ENCODE measurements at regions of chr1 and their contacts with region 1.

Region 1: DNA sequence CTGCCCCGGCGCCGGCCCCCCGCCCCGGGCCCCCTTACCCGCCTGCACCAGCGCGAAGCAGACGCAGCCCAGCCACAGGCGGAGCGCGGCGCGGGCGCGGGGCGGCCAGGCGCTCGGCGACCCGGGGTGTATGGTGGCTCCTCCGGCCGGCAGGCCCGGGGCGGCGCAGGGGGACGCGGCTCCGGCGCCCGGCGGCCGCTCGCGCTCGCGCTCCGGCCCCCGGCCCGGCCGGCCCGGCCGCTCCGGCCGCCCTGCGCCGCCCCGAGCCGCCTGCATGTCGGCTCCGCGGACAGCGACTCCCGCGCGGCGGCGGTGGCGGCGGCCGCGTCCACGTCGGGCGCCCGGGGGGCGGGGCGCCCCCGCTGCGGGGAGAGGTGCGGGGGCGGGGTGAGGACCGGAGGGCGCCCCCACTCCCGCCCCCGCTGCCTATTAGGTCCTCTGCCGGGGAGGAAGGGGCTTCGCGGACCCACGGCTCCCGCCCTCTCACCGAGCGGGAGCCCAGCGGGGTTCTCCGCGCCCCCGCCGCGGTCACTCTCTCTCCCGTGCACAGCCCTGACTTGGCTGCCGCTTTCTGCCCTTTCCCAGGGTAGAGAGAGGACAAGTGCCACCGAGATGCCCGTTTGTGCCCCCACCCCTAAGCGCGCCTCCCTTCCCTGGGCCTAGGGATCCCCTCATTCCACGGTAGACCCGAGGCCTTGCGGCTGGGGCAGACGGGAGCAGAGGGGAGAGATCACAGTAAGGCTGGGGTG is at the start of gene FNDC5:
- DNase-seq: no peak
- H3K4me3 ChIP-seq: peak within 1 kb of the TSS; percentile 54
- CTCF ChIP-seq: no peak

Region 2: DNA sequence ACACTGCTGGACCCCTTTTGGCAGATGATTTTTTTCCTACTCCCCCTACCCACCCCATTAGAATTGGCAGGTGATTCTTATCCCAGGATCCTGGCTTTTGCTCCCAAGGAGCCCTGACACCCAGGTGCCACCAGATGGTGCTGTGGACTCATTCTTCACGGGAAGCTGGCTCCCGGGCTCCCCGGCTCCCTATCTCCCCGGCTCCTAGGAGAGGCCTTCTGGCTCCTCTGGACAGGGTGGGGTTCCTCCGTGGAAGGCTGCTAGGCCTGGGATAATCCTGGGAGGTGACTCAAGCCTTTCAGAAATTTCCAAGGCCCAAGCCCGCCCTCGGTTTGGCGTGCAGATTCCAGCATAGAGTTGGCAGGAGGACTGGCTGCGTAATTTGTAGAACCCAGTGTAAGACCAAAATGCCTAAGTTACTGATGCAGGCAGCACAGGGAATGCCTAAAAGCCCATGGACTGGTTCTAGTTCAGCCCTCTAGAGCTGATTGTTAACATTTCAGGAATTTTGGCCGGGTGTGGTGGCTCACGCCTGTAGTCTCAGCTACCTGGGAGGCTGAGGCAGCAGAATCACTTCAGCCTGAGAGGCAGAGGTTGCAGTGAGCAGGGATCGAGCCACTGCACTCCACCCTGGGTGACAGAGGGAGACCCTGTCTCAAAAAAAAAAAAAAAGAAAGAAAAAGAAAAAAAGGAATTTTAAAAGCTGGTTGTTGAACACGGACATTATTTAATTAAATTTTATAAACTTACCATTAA is 469.7 kb before region 1 on chr1:
- CTCF ChIA-PET with region 1: interaction called, 43 read pairs
- POLR2A ChIA-PET with region 1: no interaction called
- DNase-seq: peak; percentile 31
- H3K4me3 ChIP-seq: no peak overlapping the region
- CTCF ChIP-seq: peak; percentile 84

Region 3: DNA sequence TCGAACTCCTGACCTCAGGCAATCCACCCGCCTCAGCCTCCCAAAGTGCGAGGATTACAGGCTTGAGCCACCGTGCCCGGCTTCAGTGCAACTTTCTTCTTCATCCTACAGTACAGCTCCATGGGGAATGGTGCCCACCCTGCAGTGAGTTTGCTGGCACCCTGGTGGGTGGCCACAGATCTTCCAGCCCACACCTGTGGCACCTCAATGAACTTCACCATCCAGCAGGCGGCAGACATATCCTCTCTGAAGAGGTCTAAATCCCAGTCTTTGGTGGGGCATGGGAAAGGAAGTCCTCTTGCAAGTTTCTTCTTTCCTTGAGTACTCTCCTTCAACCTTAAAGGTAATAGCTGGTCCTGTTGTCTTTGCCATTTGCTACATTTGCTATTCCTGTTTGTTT is 349.6 kb before region 1 on chr1:
- CTCF ChIA-PET with region 1: interaction called, 17 read pairs
- POLR2A ChIA-PET with region 1: no interaction called
- DNase-seq: no peak
- H3K4me3 ChIP-seq: no peak overlapping the region
- CTCF ChIP-seq: no peak

Region 4: DNA sequence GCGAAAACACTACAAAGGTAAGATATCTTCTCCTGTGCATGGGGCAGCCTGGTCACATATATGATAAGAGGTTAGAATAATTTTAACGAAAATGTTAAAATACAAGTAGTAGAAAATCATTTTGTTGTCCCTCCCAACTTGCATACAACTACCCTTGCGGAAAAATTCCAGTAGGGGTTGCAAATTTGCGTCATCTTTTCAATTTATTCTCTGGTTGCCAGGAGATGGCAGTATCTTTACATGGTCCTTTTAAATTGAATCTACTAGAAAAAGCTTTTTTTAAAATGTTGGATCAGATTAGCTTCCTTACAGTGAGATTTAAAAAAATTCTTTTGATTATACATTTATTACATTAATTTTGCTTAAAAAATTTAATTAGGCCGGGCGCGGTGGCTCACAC is 42.4 kb before region 1 on chr1:
- CTCF ChIA-PET with region 1: interaction called, 13 read pairs
- POLR2A ChIA-PET with region 1: no interaction called
- DNase-seq: no peak
- H3K4me3 ChIP-seq: no peak overlapping the region
- CTCF ChIP-seq: no peak

Region 5: GRCh38 chr1:32848354-32849063 is 22.3 kb before region 1 on chr1:
- CTCF ChIA-PET with region 1: interaction called, 28 read pairs
- POLR2A ChIA-PET with region 1: no interaction called
- DNase-seq: no peak
- H3K4me3 ChIP-seq: no peak overlapping the region
- CTCF ChIP-seq: no peak

Region 6: DNA sequence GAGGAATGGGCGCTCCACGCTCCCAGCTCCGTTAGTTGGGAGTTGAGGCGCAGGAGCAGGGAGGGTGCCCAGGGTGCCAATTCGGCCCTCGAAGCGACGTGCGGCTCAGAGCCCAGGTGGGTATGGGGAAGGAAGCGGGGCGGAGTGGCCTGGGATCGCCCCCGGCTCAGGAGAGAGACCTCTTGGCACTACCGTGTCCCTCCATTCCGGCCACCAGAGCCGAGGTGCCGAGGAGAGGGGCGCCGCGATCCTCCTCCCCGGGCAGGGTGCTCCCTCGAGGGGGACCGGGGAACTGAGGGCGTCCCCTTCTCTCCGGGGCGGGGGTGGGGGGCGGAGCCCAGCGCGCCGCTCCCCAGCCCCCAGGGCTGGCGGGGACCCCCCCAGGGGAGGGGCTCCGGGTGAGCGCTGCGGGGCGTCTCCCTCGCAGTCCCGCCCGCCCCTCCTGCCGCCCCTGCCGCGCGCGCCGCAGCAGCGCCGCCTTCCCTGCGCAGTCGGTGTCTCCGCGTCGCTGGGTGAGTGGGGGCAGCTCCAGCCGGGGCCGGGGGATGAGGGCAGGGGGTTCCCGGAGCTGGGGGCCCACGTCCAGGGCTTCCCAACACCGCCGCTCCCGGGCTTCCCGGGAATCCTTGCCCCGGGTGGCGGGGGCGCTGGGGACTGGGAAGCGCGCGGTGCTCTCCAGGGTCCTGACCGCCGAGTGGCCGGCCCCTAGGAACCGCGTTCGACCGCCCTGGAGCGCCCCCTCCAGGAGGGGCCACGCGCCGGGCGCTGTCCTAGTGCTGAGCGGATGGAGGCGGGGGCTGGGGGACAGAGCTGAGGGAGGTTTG is 15.4 kb after region 1 on chr1 and contains the start of gene HPCA:
- CTCF ChIA-PET with region 1: interaction called, 179 read pairs
- POLR2A ChIA-PET with region 1: no interaction called
- DNase-seq: no peak
- H3K4me3 ChIP-seq: peak within 1 kb of the TSS; percentile 20
- CTCF ChIP-seq: peak; percentile 97